H1 (cell line): ENCODE measurements at regions of chr2 and their contacts with region 1.

Region 1: GRCh38 chr2:27453967-27454366 is 11.8 kb downstream of the KRTCAP3 start:
- DNase-seq: no peak
- H3K4me3 ChIP-seq: no peak overlapping the region
- H3K27ac ChIP-seq: no peak overlapping the region
- H3K4me1 ChIP-seq: no peaks in the 10 kb centered on the region
- H3K27me3 ChIP-seq: no peaks in the 10 kb centered on the region
- CTCF ChIP-seq: peak; percentile 11 to 33 (median 13); a peak in 3 of 4 replicates
- EP300 ChIP-seq: no peak
- POLR2A ChIP-seq: no peak
- RAD21 ChIP-seq: peak; percentile 16 to 52; a peak in 3 of 4 replicates

Region 2: DNA sequence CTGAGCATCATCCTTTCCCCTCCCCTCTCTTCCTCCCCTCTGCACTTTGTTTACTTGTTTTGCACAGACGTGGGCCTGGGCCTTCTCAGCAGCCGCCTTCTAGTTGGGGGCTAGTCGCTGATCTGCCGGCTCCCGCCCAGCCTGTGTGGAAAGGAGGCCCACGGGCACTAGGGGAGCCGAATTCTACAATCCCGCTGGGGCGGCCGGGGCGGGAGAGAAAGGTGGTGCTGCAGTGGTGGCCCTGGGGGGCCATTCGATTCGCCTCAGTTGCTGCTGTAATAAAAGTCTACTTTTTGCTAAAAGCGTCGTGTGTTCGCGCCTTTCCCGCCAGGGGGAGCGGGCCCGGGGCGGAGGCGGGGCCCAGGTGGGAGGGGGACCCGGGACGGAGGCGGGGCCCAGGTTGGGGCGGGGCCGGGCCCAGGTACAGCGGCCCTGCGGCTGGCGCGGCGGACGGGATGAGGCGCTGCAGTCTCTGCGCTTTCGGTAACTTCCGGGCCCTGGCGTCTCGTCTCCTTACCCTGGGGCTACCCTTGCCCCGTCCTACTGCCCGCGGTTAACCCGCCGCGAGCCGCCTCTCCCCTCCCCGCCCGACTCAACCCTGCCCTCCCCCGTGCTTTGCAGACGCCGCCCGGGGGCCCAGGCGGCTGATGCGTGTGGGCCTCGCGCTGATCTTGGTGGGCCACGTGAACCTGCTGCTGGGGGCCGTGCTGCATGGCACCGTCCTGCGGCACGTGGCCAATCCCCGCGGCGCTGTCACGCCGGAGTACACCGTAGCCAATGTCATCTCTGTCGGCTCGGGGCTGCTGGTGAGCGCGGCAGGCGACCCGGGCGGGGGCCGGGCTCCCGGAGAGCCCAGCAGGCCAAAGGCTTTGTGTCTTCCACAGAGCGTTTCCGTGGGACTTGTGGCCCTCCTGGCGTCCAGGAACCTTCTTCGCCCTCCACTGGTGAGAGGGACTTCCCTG is 11.7 kb before region 1 on chr2 and contains the start of gene KRTCAP3:
- CTCF ChIA-PET with region 1: interaction called, 6 read pairs
- POLR2A ChIA-PET with region 1: interaction called, 10 read pairs
- DNase-seq: peak; percentile 53 to 94
- H3K4me3 ChIP-seq: peak within 1 kb of the TSS; percentile 49 to 76 (median 63)
- H3K27ac ChIP-seq: no peak within 1 kb of the TSS
- H3K4me1 ChIP-seq: peaks cover 0 to 14% (median 8%) of the 10 kb centered on the region in 4 experiments; a peak in 5 of 7 replicates
- H3K27me3 ChIP-seq: no peaks in the 10 kb centered on the region
- CTCF ChIP-seq: peak; percentile 9 to 66 (median 62)
- EP300 ChIP-seq: no peak
- POLR2A ChIP-seq: peak; percentile 40 to 57; a peak in 2 of 3 replicates
- RAD21 ChIP-seq: peak; percentile 26 to 42; a peak in 2 of 4 replicates
- total RNA-seq, gene KRTCAP3: 50.1 and 55.4 TPM in 2 replicates